ENCODE measurements at regions of chr4 and their contacts with region 1.

Region 1: DNA sequence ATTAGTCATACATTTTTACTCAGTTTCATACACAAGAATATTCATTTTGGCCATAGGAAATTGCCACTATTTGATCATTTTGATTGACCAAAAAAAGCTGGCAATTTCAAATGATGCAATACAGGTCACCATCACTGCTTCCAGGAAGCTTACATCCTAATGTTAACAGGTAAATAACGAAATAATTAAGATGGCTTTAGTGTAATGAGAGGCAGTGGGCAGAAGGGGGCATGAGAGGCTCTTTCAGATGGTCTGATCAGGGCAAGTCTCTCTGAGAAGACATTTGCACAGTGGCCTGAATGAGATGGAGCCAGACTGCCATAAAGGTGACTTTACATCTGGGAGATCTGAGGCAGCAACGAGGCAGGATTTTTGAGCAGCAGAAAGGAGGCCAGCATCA is 170.7 kb downstream of the SLIT2 start:
- DNase-seq: peak in 2 of 5 donors; percentile 17 to 31
- H3K4me3 ChIP-seq: no peak overlapping the region
- H3K27ac ChIP-seq: no peak overlapping the region
- H3K4me1 ChIP-seq: no peaks in the 10 kb centered on the region
- H3K27me3 ChIP-seq: no peaks in the 10 kb centered on the region
- CTCF ChIP-seq: peak in 1 of 3 donors; percentile 21
- EP300 ChIP-seq: no peak
- POLR2A ChIP-seq: no peak

Region 2: GRCh38 chr4:20480165-20480947 is 58.0 kb after region 1 on chr4:
- intact Hi-C with region 1: no loop called
- DNase-seq: no peak
- H3K4me3 ChIP-seq: no peak overlapping the region
- H3K27ac ChIP-seq: no peak overlapping the region
- H3K4me1 ChIP-seq: no peaks in the 10 kb centered on the region
- H3K27me3 ChIP-seq: no peaks in the 10 kb centered on the region
- CTCF ChIP-seq: no peak
- EP300 ChIP-seq: no peak
- POLR2A ChIP-seq: no peak

Region 3: DNA sequence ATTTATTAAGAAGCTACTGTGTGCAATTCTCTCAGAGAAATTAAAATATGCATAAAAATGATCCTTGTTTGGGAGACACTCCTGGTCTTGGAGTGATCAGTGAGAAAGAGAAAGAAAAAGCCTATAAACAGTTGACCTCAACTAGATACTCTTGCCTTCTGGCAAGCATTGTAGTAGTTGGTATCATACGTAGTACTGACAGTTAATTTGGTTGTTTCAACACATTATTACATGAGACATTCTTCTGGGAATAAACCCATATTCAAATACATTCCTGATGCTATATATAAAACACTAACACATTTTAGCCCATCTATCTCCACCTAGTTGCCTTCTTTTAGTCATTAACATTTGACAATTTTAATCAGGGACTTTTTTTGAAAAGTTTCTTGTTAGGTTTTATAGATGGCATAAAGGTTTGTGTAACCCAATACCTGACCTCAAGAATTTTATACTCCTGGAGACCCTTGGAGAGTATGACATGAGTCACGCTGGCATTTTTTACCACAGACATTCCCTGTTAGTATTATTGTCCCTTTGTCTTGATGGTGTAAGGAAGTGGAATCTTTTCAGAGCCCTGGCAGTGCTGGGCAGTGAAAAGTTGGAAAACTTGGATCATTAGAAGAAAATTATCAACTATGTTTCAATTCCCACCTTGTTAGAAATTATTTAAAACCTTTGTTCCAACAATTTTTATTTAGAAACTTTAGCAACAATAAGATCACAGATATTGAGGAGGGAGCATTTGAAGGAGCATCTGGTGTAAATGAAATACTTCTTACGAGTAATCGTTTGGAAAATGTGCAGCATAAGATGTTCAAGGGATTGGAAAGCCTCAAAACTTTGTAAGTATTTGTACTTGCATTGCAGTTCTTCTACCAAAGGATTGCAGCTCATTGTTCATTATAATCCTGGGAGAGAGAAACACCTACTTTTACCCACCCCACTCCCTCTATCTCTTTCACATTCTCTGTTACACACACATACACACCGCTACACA is 110.8 kb after region 1 on chr4:
- intact Hi-C with region 1: loop called in 1 of 4 experiments (anchors 10 kb)
- DNase-seq: no peak
- H3K4me3 ChIP-seq: no peak overlapping the region
- H3K27ac ChIP-seq: no peak overlapping the region
- H3K4me1 ChIP-seq: no peaks in the 10 kb centered on the region
- H3K27me3 ChIP-seq: no peaks in the 10 kb centered on the region
- CTCF ChIP-seq: no peak
- EP300 ChIP-seq: no peak
- POLR2A ChIP-seq: no peak

Region 4: GRCh38 chr4:20544645-20545044 is 122.2 kb after region 1 on chr4:
- intact Hi-C with region 1: loop called in 2 of 4 experiments (anchors 10 kb)
- DNase-seq: no peak
- H3K4me3 ChIP-seq: no peak overlapping the region
- H3K27ac ChIP-seq: no peak overlapping the region
- H3K4me1 ChIP-seq: no peaks in the 10 kb centered on the region
- H3K27me3 ChIP-seq: no peaks in the 10 kb centered on the region
- CTCF ChIP-seq: peak; percentile 24 to 45 (median 27)
- EP300 ChIP-seq: no peak
- POLR2A ChIP-seq: no peak

Region 5: GRCh38 chr4:20684852-20685763 is 262.7 kb after region 1 on chr4:
- intact Hi-C with region 1: loop called in 2 of 4 experiments (anchors 10 kb)
- DNase-seq: no peak
- H3K4me3 ChIP-seq: no peak overlapping the region
- H3K27ac ChIP-seq: no peak overlapping the region
- H3K4me1 ChIP-seq: no peaks in the 10 kb centered on the region
- H3K27me3 ChIP-seq: no peaks in the 10 kb centered on the region
- CTCF ChIP-seq: peak in 2 of 3 donors; percentile 18 to 29
- EP300 ChIP-seq: no peak
- POLR2A ChIP-seq: no peak

Measured in ovary (tissue), 10 donors.